Heart left ventricle (tissue), 16 donors: ENCODE measurements at regions of chr3 and their contacts with region 1.

Region 1: GRCh38 chr3:62632510-62633214 is 242.6 kb downstream of the CADPS start:
- DNase-seq: no peak
- ATAC-seq: peak in 3 of 4 donors; percentile 47 to 56 (median 48)
- H3K4me3 ChIP-seq: no peak overlapping the region
- H3K27ac ChIP-seq: peak overlapping the region in 1 of 12 donors; percentile 36
- H3K4me1 ChIP-seq: peaks cover 0 to 7% (median 0%) of the 10 kb centered on the region in 12 donors
- H3K27me3 ChIP-seq: peaks cover 0 to 17% (median 0%) of the 10 kb centered on the region in 9 donors
- CTCF ChIP-seq: peak in 1 of 12 donors; percentile 28
- POLR2A ChIP-seq: no peak

Region 2: GRCh38 chr3:62493109-62493801 is 139.4 kb before region 1 on chr3:
- intact Hi-C with region 1: no loop called
- DNase-seq: no peak
- ATAC-seq: no peak
- H3K4me3 ChIP-seq: no peak overlapping the region
- H3K27ac ChIP-seq: no peak overlapping the region
- H3K4me1 ChIP-seq: no peaks in the 10 kb centered on the region
- H3K27me3 ChIP-seq: no peaks in the 10 kb centered on the region
- CTCF ChIP-seq: no peak
- POLR2A ChIP-seq: no peak

Region 3: DNA sequence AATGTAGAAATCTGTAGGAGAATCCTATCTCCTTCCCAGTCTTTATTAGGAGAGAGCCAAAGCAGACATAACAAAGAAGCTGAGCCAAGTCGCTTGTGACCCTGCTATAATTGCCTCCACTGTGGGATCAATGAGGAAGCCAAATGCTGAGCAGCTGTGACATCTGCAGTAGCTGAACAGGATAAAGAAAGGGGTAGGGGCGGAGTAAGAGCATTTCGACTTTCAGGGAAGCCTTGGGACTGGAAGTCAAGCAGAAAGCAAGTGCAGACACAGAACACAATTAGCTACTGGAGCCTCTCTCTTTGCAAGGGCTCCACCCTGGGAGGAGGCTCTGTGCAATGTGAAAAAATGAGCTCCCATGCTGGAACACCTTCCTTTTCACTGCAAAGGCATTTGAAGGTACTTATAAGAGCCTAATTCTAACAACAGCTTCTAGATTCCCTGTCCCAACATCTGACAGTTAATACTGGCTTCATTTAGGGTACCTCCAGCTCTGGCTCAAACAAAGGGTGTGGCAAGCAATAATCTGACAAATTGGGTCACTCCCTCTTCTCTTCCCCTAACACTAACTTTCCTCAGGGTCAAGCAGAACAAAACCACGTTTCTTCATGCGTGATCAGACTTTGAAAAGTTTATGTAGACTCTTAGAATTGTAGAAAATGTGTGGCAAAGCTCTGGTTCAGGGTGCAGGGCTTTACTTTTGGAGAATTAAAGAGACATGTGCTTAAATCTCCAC is 76.1 kb after region 1 on chr3:
- intact Hi-C with region 1: no loop called
- DNase-seq: peak in 1 of 5 donors; percentile 26
- ATAC-seq: peak in 1 of 4 donors; percentile 36
- H3K4me3 ChIP-seq: no peak overlapping the region
- H3K27ac ChIP-seq: no peak overlapping the region
- H3K4me1 ChIP-seq: peaks cover 0 to 16% (median 0%) of the 10 kb centered on the region in 12 donors
- H3K27me3 ChIP-seq: no peaks in the 10 kb centered on the region
- CTCF ChIP-seq: no peak
- POLR2A ChIP-seq: no peak

Region 4: GRCh38 chr3:63228087-63229023 is 595.7 kb after region 1 on chr3:
- intact Hi-C with region 1: loop called in 3 of 10 experiments (anchors 10 kb)
- DNase-seq: no peak
- ATAC-seq: peak in 1 of 4 donors; percentile 50
- H3K4me3 ChIP-seq: no peak overlapping the region
- H3K27ac ChIP-seq: no peak overlapping the region
- H3K4me1 ChIP-seq: peaks cover 0 to 7% (median 0%) of the 10 kb centered on the region in 12 donors
- H3K27me3 ChIP-seq: no peaks in the 10 kb centered on the region
- CTCF ChIP-seq: peak; percentile 17 to 63 (median 48)
- POLR2A ChIP-seq: no peak